Activated CD8-positive, alpha-beta T cell treated with anti-CD3 and anti-CD28 coated beads for 36 hours (primary cell): ENCODE measurements at regions of chr11 and their contacts with region 1.

Region 1: DNA sequence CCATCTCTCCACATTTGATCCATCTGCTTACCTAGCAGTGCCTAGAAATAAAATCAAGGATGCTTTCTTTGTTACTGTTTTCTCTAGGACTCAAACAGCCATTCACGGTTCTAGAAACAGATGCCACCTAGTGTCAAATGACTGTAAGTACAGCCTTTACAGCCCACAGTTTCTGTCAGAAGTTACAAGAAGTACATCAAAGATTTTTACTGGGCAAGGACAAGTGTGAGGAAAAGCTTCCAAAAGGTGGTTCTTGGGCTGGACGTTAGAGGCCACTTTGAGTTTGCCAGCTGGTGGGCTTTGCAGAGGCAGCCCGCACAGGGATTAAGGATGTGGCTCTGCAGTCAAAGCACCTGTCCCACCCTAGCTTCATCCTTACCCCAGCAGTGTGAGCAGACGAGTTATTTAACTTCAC is 6.9 kb downstream of the KMT5B start:
- DNase-seq: no peak
- ATAC-seq: peak; percentile 80
- H3K4me3 Mint-ChIP-seq: no peak overlapping the region
- H3K27ac Mint-ChIP-seq: peak overlapping the region; percentile 16
- H3K4me1 Mint-ChIP-seq: peaks cover 62% of the 10 kb centered on the region
- H3K27me3 Mint-ChIP-seq: no peaks in the 10 kb centered on the region
- CTCF ChIP-seq: peak; percentile 79

Region 2: DNA sequence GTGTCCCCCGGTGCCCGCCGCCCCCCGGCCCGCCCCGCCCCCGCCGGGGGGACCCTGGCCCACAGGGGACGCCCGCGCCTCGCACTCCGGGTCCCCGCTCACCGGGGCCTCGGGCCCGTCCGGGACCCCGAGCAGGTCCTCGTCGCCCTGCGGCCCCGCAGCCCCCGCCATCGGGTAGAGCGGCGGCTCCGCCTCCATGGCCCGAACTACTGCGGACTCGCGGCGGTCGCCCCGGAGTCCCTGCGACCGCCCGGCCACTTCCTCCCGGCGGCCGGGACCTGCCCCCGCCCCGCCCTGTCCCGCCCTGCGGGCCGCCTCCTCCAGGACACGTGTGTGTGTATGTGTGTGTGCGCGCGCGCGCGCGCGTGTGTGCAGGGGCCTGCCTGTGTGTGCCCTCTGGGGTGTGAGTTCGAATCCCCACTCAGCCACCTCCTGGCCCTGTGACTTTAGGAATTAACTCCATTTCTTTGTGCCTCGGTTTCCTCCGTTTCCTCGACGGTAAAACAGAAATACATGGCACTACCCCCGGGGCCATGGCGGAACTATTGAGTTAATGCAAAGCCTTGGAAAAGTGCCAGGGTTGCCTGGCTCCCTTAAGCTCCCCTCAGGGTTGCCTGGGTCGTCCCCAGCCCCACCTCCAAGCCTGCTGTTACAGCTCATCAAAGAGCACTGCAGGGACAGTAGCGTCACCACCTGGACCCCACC is 202.2 kb before region 1 on chr11 and contains the start of gene UNC93B1:
- CTCF ChIA-PET with region 1: interaction called, 8 read pairs
- POLR2A ChIA-PET with region 1: no interaction called
- intact Hi-C with region 1: loop called (anchors 10 kb)
- DNase-seq: peak; percentile 94
- ATAC-seq: peak; percentile 95
- H3K4me3 Mint-ChIP-seq: peak within 1 kb of the TSS; percentile 78
- H3K27ac Mint-ChIP-seq: peak within 1 kb of the TSS; percentile 83
- H3K4me1 Mint-ChIP-seq: peaks cover 14% of the 10 kb centered on the region
- H3K27me3 Mint-ChIP-seq: no peaks in the 10 kb centered on the region
- CTCF ChIP-seq: no peak
- total RNA-seq, gene UNC93B1: 12.4 to 13.0 TPM

Region 3: GRCh38 chr11:68191661-68192579 is 14.3 kb before region 1 on chr11:
- CTCF ChIA-PET with region 1: interaction called, 32 read pairs
- POLR2A ChIA-PET with region 1: interaction called, 3 read pairs
- intact Hi-C with region 1: no loop called
- DNase-seq: no peak
- ATAC-seq: peak; percentile 55
- H3K4me3 Mint-ChIP-seq: no peak overlapping the region
- H3K27ac Mint-ChIP-seq: peak overlapping the region; percentile 21
- H3K4me1 Mint-ChIP-seq: peaks cover 46% of the 10 kb centered on the region
- H3K27me3 Mint-ChIP-seq: no peaks in the 10 kb centered on the region
- CTCF ChIP-seq: no peak

Region 4: GRCh38 chr11:68235650-68236049 is 29.5 kb after region 1 on chr11:
- CTCF ChIA-PET with region 1: no interaction called
- POLR2A ChIA-PET with region 1: no interaction called
- intact Hi-C with region 1: no loop called
- DNase-seq: no peak
- ATAC-seq: no peak
- H3K4me3 Mint-ChIP-seq: no peak overlapping the region
- H3K27ac Mint-ChIP-seq: no peak overlapping the region
- H3K4me1 Mint-ChIP-seq: no peaks in the 10 kb centered on the region
- H3K27me3 Mint-ChIP-seq: peaks cover 10% of the 10 kb centered on the region
- CTCF ChIP-seq: no peak